Activated CD4-positive, alpha-beta memory T cell treated with anti-CD3 and anti-CD28 coated beads for 36 hours (primary cell): ENCODE measurements at regions of chr9 and their contacts with region 1.

Region 1: DNA sequence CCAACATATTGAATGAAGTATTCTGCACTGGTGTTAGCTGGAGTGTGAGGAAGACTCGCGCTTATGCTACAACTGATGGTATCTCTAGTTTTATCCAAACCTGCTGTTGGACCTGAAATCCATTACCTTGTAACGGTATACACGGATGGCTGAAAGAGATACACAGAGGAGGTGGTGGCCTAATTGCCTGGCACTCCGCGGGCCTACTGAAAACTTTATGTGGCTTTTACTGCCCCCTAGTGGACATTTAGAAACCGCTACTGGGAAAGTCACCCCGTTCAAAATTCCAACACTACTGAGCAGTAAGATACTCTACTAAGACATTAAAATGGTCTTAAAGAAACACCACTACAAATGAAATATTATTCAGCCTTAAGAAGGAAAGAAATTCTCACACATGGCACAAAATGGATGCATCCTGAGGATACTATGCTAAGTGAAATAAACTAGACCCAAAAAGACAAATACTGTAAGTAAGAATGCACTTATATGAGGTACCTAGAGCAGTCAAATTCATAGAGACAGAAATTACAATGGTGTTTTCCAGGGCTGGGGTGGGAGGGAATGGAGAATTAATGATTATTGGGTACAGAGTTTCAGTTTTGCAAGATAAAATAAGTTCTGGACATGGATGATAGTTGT is 100.4 kb downstream of the TTLL11 start:
- DNase-seq: peak; percentile 47
- H3K4me3 Mint-ChIP-seq: no peak overlapping the region
- H3K27ac Mint-ChIP-seq: no peak overlapping the region
- H3K4me1 Mint-ChIP-seq: no peaks in the 10 kb centered on the region
- H3K27me3 Mint-ChIP-seq: no peaks in the 10 kb centered on the region

Region 2: DNA sequence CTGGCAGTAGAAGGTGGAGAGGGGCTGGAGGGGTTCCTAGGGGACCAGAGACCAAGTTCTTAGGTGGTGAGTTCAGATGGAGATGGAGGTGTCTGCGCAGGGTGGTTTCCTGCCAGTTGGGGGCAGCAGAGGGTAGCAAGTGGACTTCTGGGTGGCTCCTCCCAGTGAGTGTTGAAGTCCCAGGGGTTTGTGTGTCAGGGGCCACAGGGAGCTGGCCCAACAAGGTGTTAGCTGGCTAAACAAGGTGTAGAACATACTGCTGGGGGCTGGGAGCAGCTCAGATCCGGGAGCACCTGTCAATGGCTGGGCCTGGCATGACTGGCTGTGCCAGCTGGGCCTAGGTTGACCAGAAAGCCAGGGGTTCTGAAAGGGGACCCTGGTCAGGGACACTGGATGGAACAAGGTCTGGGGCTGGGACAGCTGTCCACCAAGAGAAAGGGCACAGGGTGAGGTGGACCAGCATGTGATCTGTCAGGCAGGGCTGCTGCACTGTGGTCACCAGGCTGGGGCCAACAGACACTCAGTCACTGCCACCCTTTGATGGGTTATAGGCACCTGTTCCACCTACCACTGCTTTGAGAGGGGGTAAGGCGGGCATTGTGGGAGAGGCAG is 305.7 kb before region 1 on chr9:
- CTCF ChIA-PET with region 1: interaction called, 7 read pairs
- POLR2A ChIA-PET with region 1: no interaction called
- intact Hi-C with region 1: loop called (anchors 1 kb)
- DNase-seq: peak; percentile 80
- H3K4me3 Mint-ChIP-seq: no peak overlapping the region
- H3K27ac Mint-ChIP-seq: no peak overlapping the region
- H3K4me1 Mint-ChIP-seq: no peaks in the 10 kb centered on the region
- H3K27me3 Mint-ChIP-seq: peaks cover 11% of the 10 kb centered on the region

Region 3: DNA sequence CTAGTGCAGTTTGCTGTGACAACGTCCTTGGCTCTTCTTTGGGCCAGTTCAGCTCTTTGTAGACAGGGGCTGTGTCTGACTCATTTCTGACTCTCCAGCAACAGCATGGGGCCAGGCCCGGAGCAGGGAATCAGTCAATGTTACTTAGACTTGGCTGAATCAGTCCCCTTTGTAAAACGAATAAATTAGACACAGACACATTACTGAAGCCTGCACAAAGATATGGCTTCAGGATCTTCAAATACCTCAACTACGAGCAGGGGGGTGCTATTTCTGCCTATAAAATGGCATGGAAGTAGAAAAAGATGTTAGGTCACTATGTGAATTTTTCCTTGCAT is 104.3 kb before region 1 on chr9:
- CTCF ChIA-PET with region 1: no interaction called
- POLR2A ChIA-PET with region 1: no interaction called
- intact Hi-C with region 1: no loop called
- DNase-seq: peak; percentile 33
- H3K4me3 Mint-ChIP-seq: no peak overlapping the region
- H3K27ac Mint-ChIP-seq: no peak overlapping the region
- H3K4me1 Mint-ChIP-seq: no peaks in the 10 kb centered on the region
- H3K27me3 Mint-ChIP-seq: no peaks in the 10 kb centered on the region